OCI-LY7 (cell line): ENCODE measurements at regions of chr13 and their contacts with region 1.

Region 1: GRCh38 chr13:48155848-48156247 is 60.9 kb upstream of the MED4 start:
- DNase-seq: no peak
- H3K4me3 ChIP-seq: no peak overlapping the region
- H3K27ac ChIP-seq: no peak overlapping the region
- H3K4me1 ChIP-seq: peaks cover 10% of the 10 kb centered on the region
- CTCF ChIP-seq: no peak

Region 2: DNA sequence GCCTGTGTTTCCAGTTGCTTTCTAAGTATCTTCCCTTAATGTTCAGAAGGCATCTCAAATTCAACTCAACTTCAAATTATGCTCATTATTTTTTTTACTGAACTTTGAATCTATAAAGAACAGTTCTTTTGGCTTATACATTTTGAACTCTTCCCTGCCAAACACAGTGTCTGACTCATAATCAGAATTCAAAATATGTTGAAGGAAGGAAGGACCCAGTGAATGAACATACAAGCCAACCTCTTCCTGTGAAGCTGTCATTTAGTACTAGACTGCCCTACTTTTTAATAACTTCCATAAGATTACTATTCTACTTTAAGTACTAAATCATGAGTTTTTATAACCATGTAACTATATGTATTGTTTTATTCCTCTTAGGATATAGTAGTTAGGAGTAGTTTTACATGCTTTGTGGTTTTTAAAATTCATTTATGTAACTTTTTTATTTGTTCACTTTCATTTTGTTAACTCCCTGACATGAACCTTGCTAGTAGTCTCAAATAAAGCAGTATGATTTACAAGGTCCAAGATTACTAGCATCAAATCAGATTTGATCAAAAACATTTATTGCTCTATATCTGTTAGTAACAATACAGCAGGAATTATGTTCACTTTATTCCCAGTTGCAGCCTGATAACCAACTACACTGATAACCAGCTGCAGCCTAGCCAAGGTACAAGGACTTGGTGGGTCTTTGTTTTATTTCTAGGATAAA is 111.9 kb before region 1 on chr13:
- CTCF ChIA-PET with region 1: no interaction called
- POLR2A ChIA-PET with region 1: interaction called, 11 read pairs
- intact Hi-C with region 1: no loop called
- DNase-seq: no peak
- H3K4me3 ChIP-seq: no peak overlapping the region
- H3K27ac ChIP-seq: no peak overlapping the region
- H3K4me1 ChIP-seq: peaks cover 4% of the 10 kb centered on the region
- CTCF ChIP-seq: no peak